IMR-90 (cell line): ENCODE measurements at regions of chr3 and their contacts with region 1.

Region 1: DNA sequence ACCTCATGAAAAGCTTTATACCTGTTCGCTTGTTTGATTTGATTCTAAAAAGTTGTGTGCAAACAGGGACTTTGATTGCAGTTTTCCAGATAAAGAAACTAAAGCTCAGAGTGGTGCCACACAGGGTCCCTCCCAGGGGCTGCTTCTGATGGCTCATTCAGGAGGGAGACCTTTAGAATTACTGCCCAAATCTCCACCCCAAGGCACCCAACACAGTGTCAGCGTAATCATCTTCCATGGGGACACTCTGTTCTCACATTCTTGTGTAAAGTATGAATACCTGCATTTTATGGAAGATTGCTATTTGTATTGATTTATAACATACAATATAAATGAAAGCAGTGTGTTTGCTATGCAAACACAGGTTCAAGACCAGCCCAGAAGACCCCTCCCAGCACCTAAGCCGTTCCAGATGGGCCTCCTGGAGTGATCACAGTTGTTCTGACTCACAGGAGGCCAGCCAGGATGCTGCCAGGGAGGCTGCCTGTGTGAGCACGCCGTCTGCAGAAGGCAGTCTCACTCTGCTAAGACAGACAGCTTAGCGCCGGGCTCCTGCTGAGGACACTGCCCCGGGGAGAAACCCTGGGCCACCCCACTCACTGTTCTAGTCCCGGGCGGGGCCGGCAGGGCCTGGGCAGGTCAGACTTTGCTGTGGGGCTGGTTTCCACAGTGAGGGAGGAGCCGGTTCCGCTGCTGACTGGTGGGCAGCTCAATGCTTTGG is 185.6 kb downstream of the FAM43A start:
- DNase-seq: peak; percentile 91
- ATAC-seq: peak; percentile 83
- H3K4me3 ChIP-seq: no peak overlapping the region
- H3K27ac ChIP-seq: peak overlapping the region; percentile 86
- H3K4me1 ChIP-seq: peaks cover 17% of the 10 kb centered on the region
- H3K27me3 ChIP-seq: 0 out of 2 replicates have a peak, but pooled peaks cover 3% of the 10 kb centered on the region
- CTCF ChIP-seq: 0 out of 2 replicates have a peak, but pooled peaks have one; percentile 8
- POLR2A ChIP-seq: peak; percentile 48; the same call in 1 of the 2 replicates
- RAD21 ChIP-seq: peak; percentile 36

Region 2: DNA sequence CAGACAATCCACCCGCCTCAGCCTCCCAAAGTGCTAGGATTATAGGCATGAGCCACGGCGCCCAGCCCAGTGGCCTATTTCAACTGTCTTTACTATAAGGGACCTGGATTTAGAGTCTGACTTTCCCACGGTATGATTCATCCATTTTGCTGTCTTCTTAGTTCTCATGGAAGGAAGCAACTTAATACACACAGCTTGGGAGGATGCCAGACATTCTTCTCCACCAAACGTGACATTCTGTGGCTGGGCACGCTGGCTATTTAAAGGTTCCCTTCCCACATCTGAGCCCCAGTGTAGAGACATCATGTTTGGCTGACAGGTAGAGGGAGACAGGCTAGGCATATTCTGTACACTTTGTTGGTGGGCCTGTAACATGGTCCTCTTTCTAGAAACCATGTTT is 159.4 kb before region 1 on chr3:
- CTCF ChIA-PET with region 1: no interaction called
- POLR2A ChIA-PET with region 1: no interaction called
- dilution Hi-C with region 1: no loop called
- in situ Hi-C with region 1: no loop called
- intact Hi-C with region 1: no loop called
- DNase-seq: peak; percentile 91
- ATAC-seq: peak; percentile 69
- H3K4me3 ChIP-seq: no peak overlapping the region
- H3K27ac ChIP-seq: no peak overlapping the region
- H3K4me1 ChIP-seq: no peaks in the 10 kb centered on the region
- H3K27me3 ChIP-seq: peaks cover 25% of the 10 kb centered on the region
- CTCF ChIP-seq: no peak
- POLR2A ChIP-seq: no peak
- RAD21 ChIP-seq: no peak

Region 3: GRCh38 chr3:195117978-195118581 is 246.8 kb after region 1 on chr3:
- CTCF ChIA-PET with region 1: interaction called, 3 read pairs
- POLR2A ChIA-PET with region 1: no interaction called
- dilution Hi-C with region 1: no loop called
- in situ Hi-C with region 1: no loop called
- intact Hi-C with region 1: loop called (anchors 2 kb)
- DNase-seq: peak; percentile 25
- ATAC-seq: peak; percentile 10; the same call in 1 of the 2 replicates
- H3K4me3 ChIP-seq: no peak overlapping the region
- H3K27ac ChIP-seq: peak overlapping the region; percentile 48
- H3K4me1 ChIP-seq: peaks cover 16% of the 10 kb centered on the region
- H3K27me3 ChIP-seq: no peaks in the 10 kb centered on the region
- CTCF ChIP-seq: peak; percentile 38; the same call in 1 of the 2 replicates
- POLR2A ChIP-seq: no peak
- RAD21 ChIP-seq: 0 out of 2 replicates have a peak, but pooled peaks have one; percentile 15